KBM-7 (cell line): ENCODE measurements at regions of chr5 and their contacts with region 1.

Region 1: DNA sequence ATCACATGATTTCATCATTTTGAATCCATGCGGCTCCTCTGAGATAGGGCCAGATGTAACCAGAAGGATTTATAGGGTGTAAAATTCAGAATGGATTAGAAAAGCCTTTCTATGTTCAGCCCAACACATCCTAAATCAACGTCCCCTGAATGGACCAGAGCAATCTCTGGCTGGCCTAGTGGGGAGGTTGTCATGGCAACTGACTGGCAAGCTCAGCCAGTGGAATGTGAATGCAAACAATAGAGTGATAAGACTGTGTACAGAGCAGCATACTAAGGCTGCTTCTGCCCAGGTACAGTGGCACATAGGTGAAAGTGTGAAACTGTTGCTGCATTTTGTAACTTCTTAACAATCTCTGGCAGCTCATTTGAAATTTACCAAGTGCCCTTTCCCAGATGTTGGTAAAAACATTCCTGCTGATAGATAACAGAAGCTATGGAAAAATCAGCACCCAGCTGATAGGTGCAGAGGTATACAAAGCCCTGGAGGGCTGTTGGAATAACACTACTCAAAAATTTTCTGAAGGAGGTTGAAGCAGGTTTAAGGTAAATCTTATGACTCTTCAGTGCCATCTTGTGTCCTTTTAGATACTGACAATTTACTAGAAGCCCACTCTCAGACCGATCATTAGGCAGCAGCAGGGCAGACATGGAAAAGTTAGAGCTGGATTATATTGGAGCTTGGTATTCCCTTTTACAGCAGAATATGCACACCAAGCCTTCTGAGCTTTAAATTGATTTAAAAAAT is 267.2 kb downstream of the RAB3C start:
- DNase-seq: peak; percentile 73

Region 2: DNA sequence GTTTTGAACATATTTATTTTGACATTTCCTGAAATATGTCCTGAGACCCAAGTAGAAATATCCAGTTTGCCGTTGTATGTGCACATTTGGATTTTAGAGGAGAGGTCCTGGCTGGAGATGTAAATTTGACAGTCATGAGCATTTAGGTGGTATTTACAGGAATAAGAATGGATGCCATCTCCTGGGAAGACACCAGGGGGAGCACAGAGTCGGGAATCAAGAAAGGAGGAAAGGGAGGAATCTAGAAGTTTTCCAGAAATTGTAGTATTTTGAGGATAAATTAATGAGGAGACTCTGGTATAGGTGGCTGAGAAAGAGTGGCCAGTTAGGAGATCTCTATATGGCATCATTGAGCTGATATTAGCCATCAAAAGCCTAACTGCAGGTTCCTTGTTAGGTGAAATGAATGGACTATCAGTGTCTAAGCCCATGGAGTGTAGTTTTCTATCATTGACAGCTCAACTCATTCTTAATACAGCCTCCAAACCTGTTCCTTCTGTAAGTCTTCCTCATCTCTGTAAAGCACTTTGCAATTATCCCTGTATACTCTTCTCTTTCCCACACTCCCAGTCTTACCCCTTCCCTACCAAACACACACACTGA is 351.7 kb before region 1 on chr5:
- in situ Hi-C with region 1: loop called (anchors 25 kb)
- DNase-seq: peak; percentile 50

Region 3: DNA sequence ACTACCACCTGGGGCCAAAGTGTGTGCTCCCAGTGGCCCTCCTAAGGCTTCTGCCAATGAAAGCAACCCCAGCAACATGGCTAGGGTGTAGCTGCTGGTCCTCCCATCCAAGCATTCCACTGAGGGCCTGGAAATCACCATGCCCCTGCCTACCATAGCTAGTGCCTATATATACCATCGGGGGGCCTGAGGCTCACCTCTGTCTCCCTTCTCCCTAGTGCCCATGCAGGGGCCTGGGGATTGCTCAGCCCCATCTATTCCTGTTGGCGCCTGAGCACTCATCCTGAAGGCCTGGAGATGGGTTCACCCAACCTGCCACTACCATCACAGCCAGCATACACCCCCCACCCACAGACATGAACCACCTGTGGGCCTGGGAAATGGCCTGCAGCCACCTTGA is 100.1 kb after region 1 on chr5:
- in situ Hi-C with region 1: no loop called
- DNase-seq: no peak

Region 4: DNA sequence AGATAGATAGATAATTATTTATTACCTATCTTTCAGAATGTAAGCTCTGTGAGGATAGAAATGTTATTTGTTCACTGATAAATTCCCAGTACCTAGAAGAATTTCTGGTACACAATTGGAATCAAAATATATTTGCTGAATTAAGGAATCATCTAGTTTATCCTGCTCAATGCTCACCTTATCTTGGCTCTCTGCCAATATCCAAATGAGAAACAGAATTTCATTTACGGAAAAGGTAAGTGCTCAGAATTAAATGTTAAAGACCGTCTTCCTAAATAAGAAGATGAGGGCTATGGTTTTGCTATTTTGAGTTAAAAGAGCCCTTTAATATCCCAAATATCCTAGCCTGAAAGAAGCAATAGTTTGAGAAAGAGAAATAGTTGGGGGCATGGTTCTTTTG is 1275.5 kb after region 1 on chr5:
- in situ Hi-C with region 1: no loop called
- DNase-seq: no peak